B cell (primary cell): ENCODE measurements at regions of chr3 and their contacts with region 1.

Region 1: DNA sequence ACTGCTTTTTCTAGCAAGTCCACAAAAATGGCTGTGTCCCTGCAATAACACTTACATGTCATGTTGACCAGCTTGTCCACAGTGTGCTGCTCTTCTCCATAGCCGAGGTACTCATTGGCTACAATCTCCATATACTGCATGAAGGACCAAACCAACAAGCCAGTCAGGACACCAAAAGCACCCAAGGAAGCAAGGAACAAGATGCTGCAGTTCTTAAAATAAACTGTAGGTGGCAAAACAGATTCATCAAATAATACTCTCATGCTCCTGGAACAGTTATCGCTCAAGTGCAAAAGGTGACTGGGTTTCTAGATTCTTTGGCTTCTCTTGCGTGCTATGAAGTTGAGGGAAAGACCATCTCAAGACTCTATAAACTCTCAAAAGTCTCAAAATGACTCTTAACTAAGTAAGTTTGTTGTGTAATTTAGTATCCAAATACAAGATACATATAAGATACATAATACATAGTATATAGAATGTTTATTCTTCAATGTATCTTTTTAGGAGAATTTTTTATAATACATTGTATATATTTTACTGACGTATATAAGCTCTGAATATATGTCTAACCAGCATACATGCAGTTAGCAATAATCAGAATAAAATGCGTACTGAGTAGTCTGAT is 57.0 kb downstream of the NEK10 start:
- DNase-seq: peak; percentile 66
- ATAC-seq: peak; percentile 56
- H3K4me3 ChIP-seq: no peak overlapping the region
- H3K4me3 Mint-ChIP-seq: no peak overlapping the region
- H3K27ac ChIP-seq: no peak overlapping the region
- H3K27ac Mint-ChIP-seq: no peak overlapping the region
- H3K4me1 ChIP-seq: no peaks in the 10 kb centered on the region
- H3K4me1 Mint-ChIP-seq: no peaks in the 10 kb centered on the region
- H3K27me3 ChIP-seq: no peaks in the 10 kb centered on the region
- H3K27me3 Mint-ChIP-seq: no peaks in the 10 kb centered on the region
- CTCF ChIP-seq: peak; percentile 85

Region 2: DNA sequence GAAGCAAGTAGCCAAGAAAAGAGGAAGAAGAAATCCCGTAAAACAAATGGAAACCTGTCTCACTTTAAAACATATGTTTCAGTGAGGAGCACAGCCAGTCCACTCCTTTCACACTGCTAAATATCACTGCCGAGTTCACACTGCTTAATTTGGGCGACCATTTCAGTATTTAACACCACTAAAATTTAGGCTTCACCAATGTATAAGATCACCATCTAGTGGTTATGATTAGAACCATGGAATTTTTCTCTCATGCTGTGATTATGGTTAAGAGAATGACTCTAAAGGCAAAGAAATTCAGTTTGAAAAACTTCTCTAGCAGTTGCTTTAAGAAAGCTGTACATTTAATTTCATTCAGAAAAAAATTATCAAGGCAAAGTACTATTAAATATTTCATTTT is 155.4 kb after region 1 on chr3:
- CTCF ChIA-PET with region 1: interaction called, 18 read pairs
- POLR2A ChIA-PET with region 1: no interaction called
- intact Hi-C with region 1: loop called (anchors 1 kb)
- DNase-seq: peak; percentile 59
- ATAC-seq: peak; percentile 71
- H3K4me3 ChIP-seq: no peak overlapping the region
- H3K4me3 Mint-ChIP-seq: peak overlapping the region; percentile 6
- H3K27ac ChIP-seq: no peak overlapping the region
- H3K27ac Mint-ChIP-seq: peak overlapping the region; percentile 3
- H3K4me1 ChIP-seq: peaks cover 0 to 3% of the 10 kb centered on the region in 2 donors
- H3K4me1 Mint-ChIP-seq: peaks cover 24% of the 10 kb centered on the region
- H3K27me3 ChIP-seq: no peaks in the 10 kb centered on the region
- H3K27me3 Mint-ChIP-seq: no peaks in the 10 kb centered on the region
- CTCF ChIP-seq: peak; percentile 75

Region 3: DNA sequence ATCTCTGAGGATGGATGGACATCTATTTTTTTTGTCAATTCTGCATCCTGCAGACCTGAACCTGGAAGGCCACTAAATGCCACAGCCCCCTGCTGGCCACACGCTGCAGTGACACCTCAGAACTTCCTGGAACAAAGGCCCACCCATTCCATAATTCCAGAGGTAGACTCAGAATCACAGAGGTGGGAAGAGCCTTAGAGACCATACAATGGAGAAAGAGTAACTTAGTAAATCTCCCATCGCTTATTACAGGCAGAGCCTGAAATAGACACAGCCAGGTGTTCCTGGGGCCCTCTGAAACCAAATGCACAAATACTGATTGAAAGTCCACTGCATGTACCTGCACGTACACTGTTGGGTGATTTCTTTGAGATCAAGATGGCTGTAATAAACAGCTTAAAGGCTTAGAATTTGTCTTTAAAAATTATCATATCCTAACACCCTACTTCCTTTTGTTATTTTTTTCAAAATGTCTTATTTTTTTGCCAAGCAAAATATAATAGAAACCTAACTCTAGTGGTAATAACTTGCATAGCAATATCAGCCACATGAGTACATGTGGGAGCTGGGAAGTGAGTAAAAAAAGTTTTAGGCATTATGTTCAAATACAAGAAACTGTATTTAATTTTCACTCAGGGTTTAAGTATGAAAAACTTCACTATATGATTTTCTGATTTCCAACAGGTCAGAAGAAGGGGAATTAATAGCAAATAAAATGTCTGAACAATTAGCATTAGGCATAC is 347.3 kb after region 1 on chr3:
- CTCF ChIA-PET with region 1: interaction called, 4 read pairs
- POLR2A ChIA-PET with region 1: no interaction called
- intact Hi-C with region 1: loop called (anchors 1 kb)
- DNase-seq: peak; percentile 52
- ATAC-seq: peak; percentile 62
- H3K4me3 ChIP-seq: no peak overlapping the region
- H3K4me3 Mint-ChIP-seq: no peak overlapping the region
- H3K27ac ChIP-seq: no peak overlapping the region
- H3K27ac Mint-ChIP-seq: no peak overlapping the region
- H3K4me1 ChIP-seq: peaks cover 0 to 2% of the 10 kb centered on the region in 2 donors
- H3K4me1 Mint-ChIP-seq: peaks cover 8% of the 10 kb centered on the region
- H3K27me3 ChIP-seq: no peaks in the 10 kb centered on the region
- H3K27me3 Mint-ChIP-seq: no peaks in the 10 kb centered on the region
- CTCF ChIP-seq: peak; percentile 85